Activated CD8-positive, alpha-beta T cell treated with anti-CD3 and anti-CD28 coated beads, Interleukin-2, amount 10 ng/mL, durations not matched to agents 7 days and 5 days (primary cell): ENCODE measurements at regions of chr16 and their contacts with region 1.

Region 1: GRCh38 chr16:84555418-84556195 is 51.1 kb upstream of the MEAK7 start:
- DNase-seq: no peak
- ATAC-seq: no peak
- H3K4me3 Mint-ChIP-seq: no peak overlapping the region
- H3K27ac Mint-ChIP-seq: peak overlapping the region; percentile 53
- H3K4me1 Mint-ChIP-seq: peaks cover 35% of the 10 kb centered on the region
- H3K27me3 Mint-ChIP-seq: no peaks in the 10 kb centered on the region

Region 2: DNA sequence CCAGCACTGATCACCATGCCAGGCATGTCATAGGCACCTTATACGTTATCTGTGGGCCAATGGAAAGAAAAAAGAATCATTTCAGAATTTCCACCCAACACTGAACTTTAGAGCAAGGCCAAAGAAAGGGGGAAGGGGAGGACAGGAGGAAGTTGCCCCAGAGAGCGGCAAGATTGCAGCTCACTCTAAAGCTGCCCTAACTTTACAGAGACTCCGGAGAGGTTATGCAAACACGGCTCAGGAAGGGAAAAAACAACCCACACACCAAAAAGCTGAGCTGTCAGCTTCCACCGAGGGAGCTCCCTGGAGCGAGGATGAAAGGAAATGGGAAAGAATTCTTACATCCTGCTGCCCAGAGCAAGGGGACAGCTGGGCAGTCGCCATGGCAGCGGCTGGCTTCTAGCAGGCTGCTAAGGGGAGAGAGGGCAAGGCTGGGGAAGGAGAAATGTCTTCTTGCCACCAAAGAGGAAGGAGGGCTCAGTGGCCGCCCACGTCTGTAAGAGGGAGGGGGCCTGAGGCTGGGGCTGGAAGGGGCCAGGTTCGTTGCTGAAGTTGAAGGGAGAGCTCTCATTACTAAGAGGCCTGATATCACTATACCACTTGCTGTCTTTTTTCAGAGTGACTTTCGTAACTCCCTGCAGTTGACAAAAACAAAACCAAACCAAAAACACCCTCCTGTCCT is 44.1 kb after region 1 on chr16:
- CTCF ChIA-PET with region 1: interaction called, 5 read pairs
- POLR2A ChIA-PET with region 1: interaction called, 25 read pairs
- DNase-seq: peak; percentile 63
- ATAC-seq: peak; percentile 21
- H3K4me3 Mint-ChIP-seq: peak overlapping the region; percentile 73
- H3K27ac Mint-ChIP-seq: peak overlapping the region; percentile 96
- H3K4me1 Mint-ChIP-seq: peaks cover 90% of the 10 kb centered on the region
- H3K27me3 Mint-ChIP-seq: no peaks in the 10 kb centered on the region

Region 3: DNA sequence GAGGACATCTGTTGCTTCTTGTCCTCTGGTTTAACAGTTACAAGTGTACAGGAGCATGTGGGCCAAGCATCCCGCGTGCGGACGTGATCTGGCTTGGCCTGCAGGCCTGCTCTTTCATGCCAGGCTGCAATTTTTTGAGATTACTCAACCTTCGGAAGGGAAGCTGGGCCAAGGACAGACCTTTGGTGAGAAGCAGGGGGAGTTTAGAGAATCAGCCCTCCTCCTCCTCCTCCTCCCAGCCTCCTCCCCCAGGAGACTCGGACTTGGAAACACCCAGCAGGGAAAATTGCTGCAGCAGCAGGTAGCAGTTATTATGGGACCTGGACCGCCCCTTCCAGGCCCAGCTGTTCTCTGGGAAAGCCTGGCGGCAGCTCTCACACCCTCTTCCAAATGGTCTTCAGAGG is 87.6 kb after region 1 on chr16:
- CTCF ChIA-PET with region 1: no interaction called
- POLR2A ChIA-PET with region 1: no interaction called
- DNase-seq: no peak
- ATAC-seq: no peak
- H3K4me3 Mint-ChIP-seq: no peak overlapping the region
- H3K27ac Mint-ChIP-seq: no peak overlapping the region
- H3K4me1 Mint-ChIP-seq: peaks cover 42% of the 10 kb centered on the region
- H3K27me3 Mint-ChIP-seq: peaks cover 19% of the 10 kb centered on the region

Region 4: GRCh38 chr16:84660973-84661372 is 105.4 kb after region 1 on chr16:
- CTCF ChIA-PET with region 1: no interaction called
- POLR2A ChIA-PET with region 1: no interaction called
- DNase-seq: no peak
- ATAC-seq: no peak
- H3K4me3 Mint-ChIP-seq: no peak overlapping the region
- H3K27ac Mint-ChIP-seq: no peak overlapping the region
- H3K4me1 Mint-ChIP-seq: peaks cover 43% of the 10 kb centered on the region
- H3K27me3 Mint-ChIP-seq: no peaks in the 10 kb centered on the region